ENCODE measurements at regions of chr3 and their contacts with region 1.

Region 1: DNA sequence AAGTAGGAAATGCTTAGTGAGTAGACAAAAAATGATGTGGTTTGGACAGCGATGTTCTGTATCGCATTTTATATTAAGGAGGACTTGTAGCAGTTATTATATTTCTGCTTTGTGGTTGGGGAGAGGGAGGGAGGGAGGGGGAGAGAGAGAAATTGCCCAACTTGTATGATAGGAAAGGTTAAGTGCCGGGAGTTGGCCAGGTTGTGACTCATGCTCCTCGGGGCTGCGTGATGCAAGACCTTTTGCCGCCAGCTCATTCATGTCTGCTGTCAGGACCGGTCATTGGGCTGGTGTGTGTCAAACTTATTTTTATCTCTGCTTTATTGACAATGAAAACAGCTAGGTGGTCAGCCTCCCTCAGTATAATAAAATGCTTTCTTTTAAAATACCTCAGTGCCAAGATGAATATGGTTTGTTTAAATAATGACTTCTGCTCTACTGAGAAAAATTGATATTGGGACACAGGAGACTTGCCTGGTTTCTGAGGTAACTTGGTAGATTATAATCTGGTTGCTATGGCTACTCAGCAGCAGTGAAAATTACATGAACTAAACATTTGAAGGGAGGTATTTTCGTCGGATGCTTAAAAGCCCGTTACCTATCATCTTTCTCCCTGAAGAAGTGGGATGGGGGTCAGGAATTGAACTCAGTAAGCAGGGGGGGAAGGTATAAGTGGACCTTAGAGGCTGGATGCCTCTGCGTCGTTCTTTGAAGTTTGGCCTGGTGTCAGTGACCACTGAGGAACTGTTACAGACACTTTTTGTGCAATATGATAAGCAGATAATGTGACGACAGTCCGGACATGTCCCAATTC is 90.7 kb downstream of the FNDC3B start:
- DNase-seq: peak; percentile 75
- H3K4me3 Mint-ChIP-seq: peak overlapping the region; percentile 30
- H3K27ac Mint-ChIP-seq: peak overlapping the region; percentile 83
- H3K4me1 Mint-ChIP-seq: peaks cover 53% of the 10 kb centered on the region
- H3K27me3 Mint-ChIP-seq: no peaks in the 10 kb centered on the region

Region 2: GRCh38 chr3:172094621-172095557 is 35.2 kb before region 1 on chr3:
- intact Hi-C with region 1: loop called (anchors 5 kb)
- DNase-seq: peak; percentile 79
- H3K4me3 Mint-ChIP-seq: peak overlapping the region; percentile 1
- H3K27ac Mint-ChIP-seq: peak overlapping the region; percentile 40
- H3K4me1 Mint-ChIP-seq: peaks cover 44% of the 10 kb centered on the region
- H3K27me3 Mint-ChIP-seq: no peaks in the 10 kb centered on the region

Region 3: GRCh38 chr3:172159962-172160538 is 30.0 kb after region 1 on chr3:
- intact Hi-C with region 1: no loop called
- DNase-seq: no peak
- H3K4me3 Mint-ChIP-seq: no peak overlapping the region
- H3K27ac Mint-ChIP-seq: no peak overlapping the region
- H3K4me1 Mint-ChIP-seq: peaks cover 4% of the 10 kb centered on the region
- H3K27me3 Mint-ChIP-seq: no peaks in the 10 kb centered on the region